ENCODE measurements at regions of chr12 and their contacts with region 1.

Region 1: DNA sequence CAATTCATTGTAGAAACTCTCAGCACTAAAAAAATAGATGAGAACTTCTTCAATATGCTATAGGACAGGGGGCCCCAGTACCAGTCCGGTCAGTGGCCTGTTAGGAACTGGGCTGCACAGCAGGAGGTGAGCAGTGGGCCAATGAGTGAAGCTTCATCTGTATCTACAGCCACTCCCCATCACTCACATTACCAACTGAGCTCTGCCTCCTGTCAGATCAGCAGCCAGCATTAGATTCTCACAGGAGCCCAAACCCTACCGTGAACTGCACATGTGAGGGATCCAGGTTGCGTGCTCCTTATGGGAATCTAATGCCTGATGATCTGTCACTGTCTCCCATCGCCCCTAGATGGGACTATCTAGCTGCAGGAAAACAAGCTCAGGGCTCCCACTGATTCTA is 15.7 kb upstream of the ANO2 start:
- DNase-seq: no peak
- ATAC-seq: no peak
- H3K4me3 Mint-ChIP-seq: no peak overlapping the region
- H3K27ac Mint-ChIP-seq: no peak overlapping the region
- H3K4me1 Mint-ChIP-seq: no peaks in the 10 kb centered on the region
- H3K27me3 Mint-ChIP-seq: peaks cover 4% of the 10 kb centered on the region

Region 2: GRCh38 chr12:5988659-5989116 is 27.9 kb after region 1 on chr12:
- CTCF ChIA-PET with region 1: interaction called, 14 read pairs
- POLR2A ChIA-PET with region 1: no interaction called
- intact Hi-C with region 1: no loop called
- DNase-seq: peak; percentile 89
- ATAC-seq: peak; percentile 97
- H3K4me3 Mint-ChIP-seq: no peak overlapping the region
- H3K27ac Mint-ChIP-seq: no peak overlapping the region
- H3K4me1 Mint-ChIP-seq: no peaks in the 10 kb centered on the region
- H3K27me3 Mint-ChIP-seq: no peaks in the 10 kb centered on the region

Region 3: GRCh38 chr12:6030081-6030480 is 69.3 kb after region 1 on chr12:
- CTCF ChIA-PET with region 1: no interaction called
- POLR2A ChIA-PET with region 1: no interaction called
- intact Hi-C with region 1: no loop called
- DNase-seq: no peak
- ATAC-seq: no peak
- H3K4me3 Mint-ChIP-seq: no peak overlapping the region
- H3K27ac Mint-ChIP-seq: no peak overlapping the region
- H3K4me1 Mint-ChIP-seq: no peaks in the 10 kb centered on the region
- H3K27me3 Mint-ChIP-seq: peaks cover 5% of the 10 kb centered on the region

Region 4: GRCh38 chr12:6383572-6384498 is 423.1 kb after region 1 on chr12 and contains the start of gene LTBR:
- CTCF ChIA-PET with region 1: no interaction called
- POLR2A ChIA-PET with region 1: no interaction called
- intact Hi-C with region 1: no loop called
- DNase-seq: no peak
- ATAC-seq: peak; percentile 44
- H3K4me3 Mint-ChIP-seq: no peak within 1 kb of the TSS
- H3K27ac Mint-ChIP-seq: no peak within 1 kb of the TSS
- H3K4me1 Mint-ChIP-seq: peaks cover 2% of the 10 kb centered on the region
- H3K27me3 Mint-ChIP-seq: peaks cover 15% of the 10 kb centered on the region
- total RNA-seq, gene LTBR: 0.57 to 1.1 TPM

Measured in activated CD4-positive, alpha-beta T cell treated with anti-CD3 and anti-CD28 coated beads for 36 hours (primary cell).